Heart right ventricle (tissue), 16 donors: ENCODE measurements at regions of chr11 and their contacts with region 1.

Region 1: DNA sequence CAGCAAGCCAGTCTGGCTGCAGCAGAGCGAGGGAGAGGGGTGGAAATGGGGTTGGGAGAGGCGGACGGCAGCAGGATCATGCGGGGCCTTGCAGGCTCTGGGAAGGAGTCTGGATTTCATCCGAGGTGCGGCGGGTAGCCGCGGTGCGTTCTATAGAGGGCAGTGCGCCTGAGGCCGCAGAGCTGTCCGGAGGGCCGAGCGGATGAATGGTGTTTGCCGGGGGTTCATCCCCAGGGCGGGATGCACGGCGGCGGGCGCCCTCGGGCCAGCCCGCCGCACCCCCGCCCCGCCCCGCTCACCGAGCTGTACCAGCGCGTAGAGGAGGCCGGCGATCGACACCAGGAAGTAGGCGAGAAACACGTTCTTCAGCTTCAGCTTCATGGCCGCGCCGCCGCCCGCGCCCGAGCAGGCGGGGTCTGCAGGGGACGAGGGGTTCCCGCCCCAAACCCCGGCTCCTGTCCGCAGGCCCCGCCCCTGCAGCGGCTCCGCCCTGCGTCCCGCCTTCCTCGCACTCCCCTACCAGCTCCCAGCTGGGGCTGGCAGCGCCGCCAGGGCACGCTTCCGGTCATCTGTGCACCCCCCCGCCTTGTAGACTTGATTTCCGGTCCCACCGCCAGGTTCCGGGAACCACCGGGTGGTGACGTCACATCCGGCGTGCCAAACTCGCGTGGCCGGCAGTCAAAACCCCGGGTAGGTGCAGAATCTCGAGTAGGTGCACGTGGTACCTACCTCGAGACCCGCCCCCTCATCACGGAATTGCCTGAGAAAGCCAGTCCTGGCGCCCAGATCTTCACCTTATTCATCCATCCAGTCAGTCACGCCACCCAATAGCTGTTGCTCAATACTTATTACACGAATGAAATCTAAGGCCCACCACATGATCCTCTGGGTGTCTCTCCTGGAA is at the start of gene B3GAT3:
- DNase-seq: peak; percentile 96 to 98
- ATAC-seq: peak; percentile 97 to 99 (median 98)
- H3K4me3 ChIP-seq: peak within 1 kb of the TSS; percentile 50 to 92 (median 74)
- H3K27ac ChIP-seq: peak within 1 kb of the TSS; percentile 44 to 95 (median 89)
- H3K4me1 ChIP-seq: peaks cover 4 to 27% (median 21%) of the 10 kb centered on the region in 9 donors
- H3K27me3 ChIP-seq: no peaks in the 10 kb centered on the region
- CTCF ChIP-seq: peak in 3 of 9 donors; percentile 9 to 11 (median 9)
- total RNA-seq, gene B3GAT3: 6.8 to 20.7 (median 10.6) TPM

Region 2: GRCh38 chr11:62560566-62561103 is 61.2 kb before region 1 on chr11:
- intact Hi-C with region 1: no loop called
- DNase-seq: peak; percentile 79 to 91
- ATAC-seq: peak; percentile 67 to 89 (median 86)
- H3K4me3 ChIP-seq: no peak overlapping the region
- H3K27ac ChIP-seq: peak overlapping the region; percentile 44 to 81 (median 72)
- H3K4me1 ChIP-seq: peaks cover 22 to 52% (median 38%) of the 10 kb centered on the region in 9 donors
- H3K27me3 ChIP-seq: no peaks in the 10 kb centered on the region
- CTCF ChIP-seq: peak; percentile 78 to 89 (median 83)

Region 3: GRCh38 chr11:62645956-62646824 is 24.4 kb after region 1 on chr11 and contains the start of gene GANAB:
- intact Hi-C with region 1: loop called in 3 of 10 experiments (anchors 2 kb)
- DNase-seq: peak; percentile 99 to 100
- ATAC-seq: peak; percentile 96 to 100 (median 98)
- H3K4me3 ChIP-seq: peak within 1 kb of the TSS; percentile 65 to 100 (median 96)
- H3K27ac ChIP-seq: peak within 1 kb of the TSS; percentile 68 to 98 (median 96)
- H3K4me1 ChIP-seq: peaks cover 12 to 31% (median 25%) of the 10 kb centered on the region in 9 donors
- H3K27me3 ChIP-seq: no peaks in the 10 kb centered on the region
- CTCF ChIP-seq: no peak
- total RNA-seq, gene GANAB: 84.0 to 148 (median 96.7) TPM